ENCODE measurements at regions of chr22 and their contacts with region 1.

Region 1: DNA sequence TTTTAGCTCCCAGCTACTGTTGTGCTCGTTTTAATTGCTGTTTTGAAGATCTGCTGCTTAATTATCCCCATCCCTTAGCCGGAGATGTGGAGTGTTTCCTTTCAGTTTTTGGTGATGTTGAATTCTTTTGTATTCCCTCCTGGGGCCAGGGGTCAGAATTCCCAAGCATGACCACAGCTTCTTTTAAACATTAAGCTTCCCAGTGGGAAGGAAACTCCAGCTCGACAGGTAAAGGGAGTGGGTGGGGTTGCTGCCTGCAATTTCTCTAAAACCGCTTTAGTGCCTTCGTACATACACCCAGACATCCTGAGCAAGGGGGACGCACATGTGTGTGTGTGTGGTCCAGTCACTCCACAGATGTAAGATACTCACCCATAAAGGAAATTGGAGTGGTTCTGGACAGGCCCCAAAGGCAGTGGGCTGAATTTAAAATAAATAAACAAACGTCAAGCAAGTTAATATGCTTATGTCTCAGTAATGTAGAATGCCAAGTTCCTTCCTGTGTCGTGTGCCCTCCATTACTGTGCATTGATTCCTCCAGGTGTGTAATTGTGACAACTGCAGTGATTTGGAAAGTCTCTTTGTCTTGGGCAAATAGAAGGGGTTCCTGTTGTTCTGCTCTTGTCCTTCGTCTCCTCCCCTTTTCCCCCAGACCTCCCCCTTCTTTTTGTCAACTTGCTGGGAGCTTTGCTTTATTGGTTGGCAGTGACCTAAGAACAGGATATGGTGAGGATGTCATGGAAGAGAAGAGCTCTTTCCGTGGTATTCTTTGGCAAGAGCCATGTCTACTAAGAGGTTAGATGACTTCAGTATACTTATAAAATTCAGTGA is 19.2 kb upstream of the ADSL start:
- DNase-seq: no peak
- ATAC-seq: no peak
- H3K4me3 ChIP-seq: no peak overlapping the region
- H3K27ac ChIP-seq: no peak overlapping the region
- H3K4me1 ChIP-seq: no peaks in the 10 kb centered on the region
- H3K27me3 ChIP-seq: no peaks in the 10 kb centered on the region
- CTCF ChIP-seq: no peak

Region 2: GRCh38 chr22:39617970-39618757 is 709.0 kb before region 1 on chr22:
- CTCF ChIA-PET with region 1: interaction called, 11 read pairs
- POLR2A ChIA-PET with region 1: no interaction called
- in situ Hi-C with region 1: no loop called
- intact Hi-C with region 1: no loop called
- DNase-seq: no peak
- ATAC-seq: no peak
- H3K4me3 ChIP-seq: no peak overlapping the region
- H3K27ac ChIP-seq: no peak overlapping the region
- H3K4me1 ChIP-seq: no peaks in the 10 kb centered on the region
- H3K27me3 ChIP-seq: no peaks in the 10 kb centered on the region
- CTCF ChIP-seq: no peak

Region 3: GRCh38 chr22:39932918-39933649 is 394.0 kb before region 1 on chr22:
- CTCF ChIA-PET with region 1: no interaction called
- POLR2A ChIA-PET with region 1: interaction called, 10 read pairs
- in situ Hi-C with region 1: no loop called
- intact Hi-C with region 1: no loop called
- DNase-seq: peak; percentile 12
- ATAC-seq: no peak
- H3K4me3 ChIP-seq: no peak overlapping the region
- H3K27ac ChIP-seq: no peak overlapping the region
- H3K4me1 ChIP-seq: no peaks in the 10 kb centered on the region
- H3K27me3 ChIP-seq: peaks cover 9% of the 10 kb centered on the region
- CTCF ChIP-seq: peak; percentile 70

Region 4: DNA sequence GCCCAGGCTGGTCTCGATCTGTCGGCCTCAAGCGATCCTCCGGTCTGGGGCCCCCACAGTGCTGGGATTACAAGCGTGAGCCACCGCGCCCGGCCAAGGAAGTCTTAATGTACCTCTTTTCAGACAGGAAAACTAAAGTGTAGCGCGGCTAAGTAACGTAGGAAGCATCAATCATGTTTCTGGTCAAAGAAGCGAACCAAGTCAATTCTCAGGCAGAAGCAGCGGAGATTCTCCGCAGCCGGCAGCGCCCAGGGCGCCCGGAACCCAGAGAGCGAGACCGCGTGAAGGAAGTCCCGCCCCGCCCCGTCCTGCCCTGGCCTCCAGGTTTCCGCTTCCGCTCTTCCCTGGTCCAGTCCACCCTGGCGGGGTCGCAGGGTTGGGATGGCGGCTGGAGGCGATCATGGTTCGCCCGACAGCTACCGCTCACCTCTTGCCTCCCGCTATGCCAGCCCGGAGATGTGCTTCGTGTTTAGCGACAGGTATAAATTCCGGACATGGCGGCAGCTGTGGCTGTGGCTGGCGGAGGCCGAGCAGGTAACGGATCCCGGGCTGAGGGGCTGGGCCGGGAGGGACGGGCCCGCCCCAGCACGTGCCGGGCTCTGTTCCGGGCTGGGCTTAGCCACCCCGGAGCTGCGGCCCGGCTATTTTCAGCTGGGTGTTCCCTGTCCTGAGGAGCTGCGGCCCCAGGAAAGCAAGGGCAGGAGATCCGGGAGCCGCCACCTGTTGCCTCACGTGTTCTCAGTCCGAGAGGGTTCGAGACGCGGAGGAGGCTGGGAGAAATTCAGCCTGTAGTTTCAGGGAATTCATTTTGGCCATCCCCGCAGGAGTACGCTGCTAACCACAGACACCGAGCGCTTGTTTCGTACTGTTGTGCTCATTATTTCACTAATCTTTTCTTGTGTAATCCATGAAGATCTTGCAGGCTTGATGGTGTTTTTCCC is 19.3 kb after region 1 on chr22 and contains the start of gene ADSL:
- CTCF ChIA-PET with region 1: no interaction called
- POLR2A ChIA-PET with region 1: interaction called, 15 read pairs
- in situ Hi-C with region 1: no loop called
- intact Hi-C with region 1: no loop called
- DNase-seq: peak; percentile 36
- ATAC-seq: peak; percentile 99
- H3K4me3 ChIP-seq: peak within 1 kb of the TSS; percentile 85 to 96
- H3K27ac ChIP-seq: peak within 1 kb of the TSS; percentile 96
- H3K4me1 ChIP-seq: peaks cover 8% of the 10 kb centered on the region
- H3K27me3 ChIP-seq: no peaks in the 10 kb centered on the region
- CTCF ChIP-seq: no peak
- total RNA-seq, gene ADSL: 107 TPM